Esophagus squamous epithelium (tissue), 5 donors: ENCODE measurements at regions of chr22 and their contacts with region 1.

Region 1: GRCh38 chr22:41697126-41697775 is 2.1 kb upstream of the MEI1 start:
- DNase-seq: peak; percentile 37
- H3K4me3 ChIP-seq: peak overlapping the region in 3 of 4 donors; percentile 24 to 53 (median 26)
- H3K27ac ChIP-seq: peak overlapping the region in 3 of 4 donors; percentile 37 to 70 (median 40)
- H3K4me1 ChIP-seq: peaks cover 10 to 24% (median 12%) of the 10 kb centered on the region in 3 donors
- H3K27me3 ChIP-seq: peaks cover 0 to 6% (median 0%) of the 10 kb centered on the region in 4 donors
- CTCF ChIP-seq: peak; percentile 97 to 100 (median 98)
- POLR2A ChIP-seq: no peak

Region 2: GRCh38 chr22:41532908-41533825 is 164.1 kb before region 1 on chr22:
- intact Hi-C with region 1: no loop called
- DNase-seq: no peak
- H3K4me3 ChIP-seq: no peak overlapping the region
- H3K27ac ChIP-seq: peak overlapping the region; percentile 4 to 60 (median 29)
- H3K4me1 ChIP-seq: peaks cover 0 to 12% (median 5%) of the 10 kb centered on the region in 3 donors
- H3K27me3 ChIP-seq: no peaks in the 10 kb centered on the region
- CTCF ChIP-seq: peak; percentile 52 to 79 (median 66)
- POLR2A ChIP-seq: no peak

Region 3: DNA sequence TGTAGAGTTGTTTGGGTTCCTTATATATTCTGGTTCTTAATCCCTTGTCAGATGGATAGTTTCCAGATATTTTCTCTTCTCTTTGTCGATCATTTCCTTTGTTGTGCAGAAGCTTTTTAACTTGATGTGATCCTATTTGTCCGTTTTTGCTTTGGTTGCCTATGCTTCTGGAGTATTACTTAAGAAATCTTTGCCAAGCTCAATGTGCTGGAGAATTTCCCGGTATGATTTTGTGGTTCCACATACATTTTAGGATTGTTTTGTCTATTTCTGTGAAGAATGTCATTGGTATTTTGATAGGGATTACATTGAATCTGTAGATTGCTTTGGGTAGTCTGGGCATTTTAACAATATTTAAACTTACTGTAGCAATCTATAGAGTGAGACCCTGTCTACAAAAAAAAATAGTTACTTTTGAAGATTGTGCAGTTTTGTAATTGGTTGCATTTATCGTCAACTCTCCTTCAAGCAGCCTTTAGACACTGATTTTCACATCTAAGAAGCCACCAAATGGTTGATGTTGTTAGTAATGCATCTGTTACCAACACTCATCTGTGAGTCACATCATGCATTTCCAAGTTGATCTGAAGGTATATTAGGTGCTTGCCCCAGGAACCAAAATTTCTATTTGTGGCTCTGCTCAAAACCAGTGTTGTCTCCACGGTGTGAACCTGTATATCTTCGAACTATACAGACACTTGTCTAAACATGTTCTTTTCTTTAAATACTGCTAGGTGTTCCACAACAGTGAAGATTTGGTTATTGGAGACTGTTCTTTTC is 54.7 kb before region 1 on chr22:
- intact Hi-C with region 1: no loop called
- DNase-seq: no peak
- H3K4me3 ChIP-seq: no peak overlapping the region
- H3K27ac ChIP-seq: no peak overlapping the region
- H3K4me1 ChIP-seq: no peaks in the 10 kb centered on the region
- H3K27me3 ChIP-seq: no peaks in the 10 kb centered on the region
- CTCF ChIP-seq: no peak
- POLR2A ChIP-seq: no peak

Region 4: GRCh38 chr22:41940832-41941765 is 243.8 kb after region 1 on chr22:
- intact Hi-C with region 1: loop called (anchors 5 kb)
- DNase-seq: no peak
- H3K4me3 ChIP-seq: no peak overlapping the region
- H3K27ac ChIP-seq: peak overlapping the region; percentile 79 to 88 (median 84)
- H3K4me1 ChIP-seq: peaks cover 7 to 57% (median 12%) of the 10 kb centered on the region in 3 donors
- H3K27me3 ChIP-seq: no peaks in the 10 kb centered on the region
- CTCF ChIP-seq: peak; percentile 92 to 98 (median 97)
- POLR2A ChIP-seq: no peak